A673 (cell line): ENCODE measurements at regions of chr2 and their contacts with region 1.

Region 1: GRCh38 chr2:23404426-23404825 is 19.4 kb downstream of the KLHL29 start:
- DNase-seq: peak; percentile 92
- H3K4me3 ChIP-seq: peak overlapping the region; percentile 32
- H3K27ac ChIP-seq: peak overlapping the region; percentile 51
- H3K4me1 ChIP-seq: peaks cover 20% of the 10 kb centered on the region
- H3K27me3 ChIP-seq: no peaks in the 10 kb centered on the region
- CTCF ChIP-seq: peak; percentile 61

Region 2: DNA sequence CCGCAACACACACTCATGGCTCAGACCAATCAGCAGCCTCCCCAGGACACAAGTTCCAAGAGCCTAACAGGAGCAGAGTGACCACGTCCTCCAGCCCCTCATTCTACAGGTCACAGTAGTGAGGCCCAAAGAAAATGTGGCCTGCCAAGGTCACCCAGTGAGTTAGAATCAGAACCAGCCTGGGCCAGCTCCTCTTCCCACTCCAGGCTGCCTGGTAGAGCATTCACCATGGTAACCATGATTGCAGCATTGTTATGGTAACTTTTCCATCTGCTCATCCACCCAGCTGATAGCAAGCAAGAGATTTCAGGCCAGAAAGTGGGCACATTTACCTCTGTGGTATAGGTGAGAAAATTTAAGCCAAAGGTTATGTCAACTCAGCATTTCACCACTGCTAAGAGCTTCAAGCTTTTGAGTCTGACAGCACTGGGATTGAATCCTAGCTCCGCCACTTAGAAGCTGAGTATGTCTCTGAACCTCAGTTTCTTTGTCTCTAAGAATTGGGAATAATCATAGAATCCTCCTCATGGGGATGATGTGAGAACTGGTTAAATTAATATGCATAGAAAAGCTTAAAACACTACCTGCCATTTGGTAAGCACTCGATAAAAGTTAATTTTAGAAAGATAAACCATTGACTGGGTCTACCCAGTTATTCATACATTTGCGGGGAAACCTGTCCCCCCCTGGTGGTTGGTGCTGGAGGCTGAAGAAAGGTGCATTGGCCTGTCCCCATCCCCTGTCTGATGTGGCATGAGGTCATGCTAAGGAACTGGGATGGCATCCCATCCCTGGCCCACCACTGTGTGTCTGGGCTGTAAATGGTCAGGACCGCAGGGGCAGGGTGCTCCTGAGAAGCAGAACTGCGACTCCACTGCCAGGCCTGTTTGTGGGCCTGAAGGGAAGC is 162.1 kb after region 1 on chr2:
- CTCF ChIA-PET with region 1: interaction called, 7 read pairs
- POLR2A ChIA-PET with region 1: no interaction called
- intact Hi-C with region 1: loop called (anchors 5 kb)
- DNase-seq: peak; percentile 50
- H3K4me3 ChIP-seq: no peak overlapping the region
- H3K27ac ChIP-seq: no peak overlapping the region
- H3K4me1 ChIP-seq: peaks cover 3% of the 10 kb centered on the region
- H3K27me3 ChIP-seq: no peaks in the 10 kb centered on the region
- CTCF ChIP-seq: peak; percentile 67

Region 3: DNA sequence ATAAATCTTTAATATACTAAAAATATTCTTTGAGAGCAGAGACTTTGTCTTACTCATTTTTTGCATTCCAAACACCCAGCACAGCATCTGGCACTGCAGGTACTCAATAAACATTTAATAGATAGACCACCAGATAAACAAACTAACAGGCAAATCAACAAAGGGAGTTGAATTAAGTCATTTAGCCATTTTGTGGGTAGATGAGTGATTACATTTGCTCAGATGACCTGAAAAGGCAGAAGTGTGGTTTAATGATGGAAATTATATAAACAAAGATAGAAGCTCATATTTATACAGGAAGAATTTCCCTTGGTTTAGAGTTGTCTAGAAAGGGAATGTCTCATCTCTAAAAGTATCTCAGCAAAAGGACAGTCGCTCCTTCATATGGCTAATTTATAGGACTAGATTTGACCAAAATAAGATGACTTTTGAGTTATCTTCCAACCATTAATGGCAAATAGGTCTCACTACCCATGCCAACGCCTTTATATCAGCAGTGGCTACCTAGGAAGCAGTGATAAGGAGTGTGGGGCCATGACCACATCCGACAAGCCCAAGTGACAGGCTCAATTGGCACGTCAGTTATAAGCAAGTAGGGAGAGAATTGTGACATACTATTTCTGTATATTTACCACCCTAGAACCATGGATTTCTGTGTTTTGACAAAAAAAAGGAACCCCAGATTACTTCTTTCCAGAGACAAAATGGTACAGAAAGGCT is 349.0 kb after region 1 on chr2:
- CTCF ChIA-PET with region 1: no interaction called
- POLR2A ChIA-PET with region 1: no interaction called
- intact Hi-C with region 1: loop called (anchors 5 kb)
- DNase-seq: no peak
- H3K4me3 ChIP-seq: no peak overlapping the region
- H3K27ac ChIP-seq: no peak overlapping the region
- H3K4me1 ChIP-seq: peaks cover 59% of the 10 kb centered on the region
- H3K27me3 ChIP-seq: no peaks in the 10 kb centered on the region
- CTCF ChIP-seq: no peak